ENCODE measurements at regions of chr9 and their contacts with region 1.

Region 1: GRCh38 chr9:127955294-127956035 is 17.8 kb upstream of the DPM2 start:
- DNase-seq: peak; percentile 76
- ATAC-seq: peak; percentile 96
- H3K4me3 Mint-ChIP-seq: no peak overlapping the region
- H3K27ac Mint-ChIP-seq: peak overlapping the region; percentile 80
- H3K4me1 Mint-ChIP-seq: peaks cover 18% of the 10 kb centered on the region
- H3K27me3 Mint-ChIP-seq: no peaks in the 10 kb centered on the region
- CTCF ChIP-seq: peak; percentile 32; the same call in 1 of the 2 replicates

Region 2: DNA sequence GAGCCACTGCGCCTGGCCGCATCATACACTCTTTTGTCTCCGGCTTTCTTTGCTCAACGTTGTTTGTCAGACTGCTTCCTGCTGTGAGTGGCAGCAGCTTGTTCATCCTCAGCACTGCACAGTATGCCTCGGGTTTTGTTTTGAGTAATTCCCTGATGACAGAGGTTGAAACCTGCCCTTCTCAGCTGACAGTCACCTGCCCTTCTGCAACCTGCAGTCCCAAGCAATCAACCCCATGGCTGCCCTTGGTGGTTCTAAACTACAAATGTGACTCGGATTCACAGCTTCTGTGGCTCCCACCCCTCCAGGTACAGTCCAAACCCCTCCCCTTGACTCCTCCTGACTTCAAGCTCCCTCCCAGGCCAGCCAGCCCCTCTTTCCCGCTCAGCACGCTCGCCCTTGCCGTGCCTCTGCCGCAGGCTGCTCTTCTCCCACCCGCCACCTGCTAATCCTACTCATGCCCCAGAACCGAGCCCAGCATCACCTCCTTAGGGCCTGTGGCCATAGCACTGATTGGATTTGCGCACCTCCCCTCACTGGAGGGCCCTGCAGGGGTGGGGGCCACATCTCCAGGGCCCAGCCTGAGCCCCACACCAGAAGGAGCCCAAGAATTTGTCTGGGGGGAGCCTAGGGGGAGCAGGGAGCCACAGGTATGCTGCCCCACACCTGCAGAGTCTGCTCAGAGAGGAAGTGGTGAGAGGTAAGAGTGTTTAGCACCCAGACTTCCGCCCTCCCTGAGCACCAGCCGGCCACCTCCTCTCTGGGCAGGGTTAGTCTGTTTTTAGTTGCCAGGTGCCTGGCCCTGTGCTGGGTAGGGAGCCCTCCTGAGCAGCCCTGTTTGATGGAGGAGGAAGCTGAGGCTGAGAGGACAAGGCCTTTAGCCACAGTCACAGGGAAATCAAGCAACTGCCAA is 15.2 kb after region 1 on chr9:
- CTCF ChIA-PET with region 1: interaction called, 32 read pairs
- POLR2A ChIA-PET with region 1: no interaction called
- DNase-seq: no peak
- ATAC-seq: peak; percentile 15
- H3K4me3 Mint-ChIP-seq: no peak overlapping the region
- H3K27ac Mint-ChIP-seq: peak overlapping the region; percentile 90
- H3K4me1 Mint-ChIP-seq: peaks cover 78% of the 10 kb centered on the region
- H3K27me3 Mint-ChIP-seq: no peaks in the 10 kb centered on the region
- CTCF ChIP-seq: no peak

Region 3: DNA sequence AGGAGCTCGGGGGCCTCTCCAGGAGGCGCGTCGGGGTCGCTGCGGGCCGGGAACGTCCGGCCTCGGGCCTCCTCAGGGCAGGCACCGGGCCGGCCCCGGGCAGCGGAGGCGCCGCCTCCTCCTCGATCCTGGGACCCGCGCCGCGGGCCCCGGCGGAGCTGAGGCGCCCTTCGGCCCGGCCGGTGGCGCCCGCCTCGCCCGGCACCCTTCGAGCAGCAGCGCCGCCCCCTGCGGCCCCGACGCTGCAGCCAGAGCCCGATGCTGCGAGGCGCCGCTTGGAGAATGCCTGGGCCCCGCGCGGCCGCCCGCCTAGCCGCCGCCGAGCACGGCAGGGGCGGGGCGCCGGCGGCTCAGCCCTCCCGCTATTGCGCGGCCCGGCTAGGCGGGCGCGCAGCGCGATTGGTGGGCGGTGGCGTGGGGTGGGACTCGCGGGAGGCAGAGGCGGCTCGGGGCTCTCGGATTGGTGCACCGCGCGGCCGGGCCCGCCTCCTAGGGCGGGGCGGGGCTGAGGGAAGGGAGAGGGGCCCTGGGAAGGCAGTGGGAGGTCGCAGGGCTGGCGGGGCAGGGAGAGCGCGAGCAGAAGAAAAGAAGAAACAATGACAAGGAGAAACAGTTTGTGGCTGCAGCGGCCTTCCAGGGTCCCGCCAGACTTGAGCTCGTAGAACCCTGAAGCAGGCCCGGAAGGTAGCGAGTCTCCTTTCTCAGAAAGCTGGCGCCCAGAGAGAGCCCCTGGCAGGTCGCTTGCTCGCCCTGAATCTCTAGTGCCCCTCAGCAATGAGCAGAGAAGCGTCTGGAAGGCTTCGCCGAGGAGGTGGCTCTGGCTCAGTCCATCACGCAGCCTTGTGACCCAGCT is 25.5 kb after region 1 on chr9 and contains the start of gene EEIG1:
- CTCF ChIA-PET with region 1: interaction called, 32 read pairs
- POLR2A ChIA-PET with region 1: interaction called, 6 read pairs
- DNase-seq: peak; percentile 98
- ATAC-seq: peak; percentile 91
- H3K4me3 Mint-ChIP-seq: peak within 1 kb of the TSS; percentile 95
- H3K27ac Mint-ChIP-seq: peak within 1 kb of the TSS; percentile 97
- H3K4me1 Mint-ChIP-seq: peaks cover 54% of the 10 kb centered on the region
- H3K27me3 Mint-ChIP-seq: no peaks in the 10 kb centered on the region
- CTCF ChIP-seq: no peak
- total RNA-seq, gene EEIG1: 42.2 to 66.4 TPM (median 51.3 TPM) in 3 replicates

Region 4: DNA sequence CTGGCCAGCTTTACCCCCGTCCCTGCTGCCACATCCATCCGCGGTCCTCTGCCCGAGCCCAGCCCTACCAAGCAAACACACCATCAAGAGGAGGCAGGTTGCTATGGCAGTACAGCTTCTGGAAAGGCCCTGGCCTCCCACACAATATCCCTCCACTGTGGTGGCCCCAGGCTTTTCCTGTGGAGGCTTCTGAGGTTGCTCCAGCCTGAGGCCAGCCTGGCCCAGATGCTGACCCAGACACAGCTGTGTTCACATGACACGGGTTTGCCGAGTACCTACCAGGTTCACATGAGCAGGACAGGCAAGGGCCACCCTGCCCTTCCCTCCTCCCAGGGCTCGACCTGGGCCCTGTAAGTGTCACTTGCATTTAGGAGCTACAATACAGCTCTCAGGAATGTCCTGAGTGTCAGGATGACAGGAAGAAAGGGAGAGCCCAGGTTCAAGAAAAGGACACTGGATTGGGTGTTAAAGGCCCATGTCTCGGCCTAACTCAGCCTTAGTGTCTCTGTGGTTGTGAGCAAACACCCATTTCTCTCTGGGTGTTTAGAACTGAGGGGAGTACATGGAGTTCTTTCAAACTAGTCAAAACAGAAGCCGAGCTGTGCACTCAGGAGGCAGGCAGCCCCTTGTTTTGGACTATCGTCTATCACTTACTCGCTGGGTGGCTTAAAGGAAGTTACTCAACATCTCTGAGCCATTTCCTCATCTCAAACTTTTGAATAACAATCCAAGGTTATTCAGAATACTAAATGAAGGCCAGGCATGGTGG is 71.5 kb after region 1 on chr9:
- CTCF ChIA-PET with region 1: interaction called, 15 read pairs
- POLR2A ChIA-PET with region 1: no interaction called
- DNase-seq: no peak
- ATAC-seq: no peak; the same call in 1 of the 2 replicates
- H3K4me3 Mint-ChIP-seq: no peak overlapping the region
- H3K27ac Mint-ChIP-seq: peak overlapping the region; percentile 38; the same call in 1 of the 2 replicates
- H3K4me1 Mint-ChIP-seq: peaks cover 4% of the 10 kb centered on the region
- H3K27me3 Mint-ChIP-seq: no peaks in the 10 kb centered on the region
- CTCF ChIP-seq: no peak